Ovary (tissue), 10 donors: ENCODE measurements at regions of chr7 and their contacts with region 1.

Region 1: GRCh38 chr7:145839814-145840213 is 276.8 kb upstream of the CNTNAP2 start:
- DNase-seq: no peak
- H3K4me3 ChIP-seq: no peak overlapping the region
- H3K27ac ChIP-seq: no peak overlapping the region
- H3K4me1 ChIP-seq: no peaks in the 10 kb centered on the region
- H3K27me3 ChIP-seq: no peaks in the 10 kb centered on the region
- CTCF ChIP-seq: no peak
- EP300 ChIP-seq: no peak
- POLR2A ChIP-seq: no peak

Region 2: GRCh38 chr7:145360511-145361100 is 479.2 kb before region 1 on chr7:
- intact Hi-C with region 1: no loop called
- DNase-seq: no peak
- H3K4me3 ChIP-seq: no peak overlapping the region
- H3K27ac ChIP-seq: no peak overlapping the region
- H3K4me1 ChIP-seq: no peaks in the 10 kb centered on the region
- H3K27me3 ChIP-seq: no peaks in the 10 kb centered on the region
- CTCF ChIP-seq: no peak
- EP300 ChIP-seq: no peak
- POLR2A ChIP-seq: no peak

Region 3: GRCh38 chr7:145633513-145633912 is 206.3 kb before region 1 on chr7:
- intact Hi-C with region 1: loop called in 1 of 4 experiments (anchors 2 kb)
- DNase-seq: no peak
- H3K4me3 ChIP-seq: no peak overlapping the region
- H3K27ac ChIP-seq: no peak overlapping the region
- H3K4me1 ChIP-seq: no peaks in the 10 kb centered on the region
- H3K27me3 ChIP-seq: no peaks in the 10 kb centered on the region
- CTCF ChIP-seq: no peak
- EP300 ChIP-seq: no peak
- POLR2A ChIP-seq: no peak